ENCODE measurements at regions of chr1 and their contacts with region 1.

Region 1: GRCh38 chr1:87328272-87329050 is at the start of gene LMO4:
- DNase-seq: peak; percentile 99
- H3K4me3 ChIP-seq: peak within 1 kb of the TSS; percentile 86
- H3K27ac ChIP-seq: peak within 1 kb of the TSS; percentile 96
- H3K4me1 ChIP-seq: peaks cover 21% of the 10 kb centered on the region
- H3K27me3 ChIP-seq: no peaks in the 10 kb centered on the region
- CTCF ChIP-seq: no peak
- total RNA-seq, gene LMO4: 32.2 and 35.3 TPM in 2 replicates

Region 2: GRCh38 chr1:87131809-87132283 is 196.6 kb before region 1 on chr1:
- CTCF ChIA-PET with region 1: no interaction called
- POLR2A ChIA-PET with region 1: interaction called, 10 read pairs
- intact Hi-C with region 1: no loop called
- DNase-seq: peak; percentile 82
- H3K4me3 ChIP-seq: peak overlapping the region; percentile 36
- H3K27ac ChIP-seq: peak overlapping the region; percentile 36
- H3K4me1 ChIP-seq: no peaks in the 10 kb centered on the region
- H3K27me3 ChIP-seq: no peaks in the 10 kb centered on the region
- CTCF ChIP-seq: peak; percentile 97

Region 3: GRCh38 chr1:87392248-87393192 is 64.1 kb after region 1 on chr1:
- CTCF ChIA-PET with region 1: no interaction called
- POLR2A ChIA-PET with region 1: no interaction called
- intact Hi-C with region 1: no loop called
- DNase-seq: peak; percentile 42
- H3K4me3 ChIP-seq: no peak overlapping the region
- H3K27ac ChIP-seq: no peak overlapping the region
- H3K4me1 ChIP-seq: peaks cover 17% of the 10 kb centered on the region
- H3K27me3 ChIP-seq: no peaks in the 10 kb centered on the region
- CTCF ChIP-seq: no peak

Region 4: DNA sequence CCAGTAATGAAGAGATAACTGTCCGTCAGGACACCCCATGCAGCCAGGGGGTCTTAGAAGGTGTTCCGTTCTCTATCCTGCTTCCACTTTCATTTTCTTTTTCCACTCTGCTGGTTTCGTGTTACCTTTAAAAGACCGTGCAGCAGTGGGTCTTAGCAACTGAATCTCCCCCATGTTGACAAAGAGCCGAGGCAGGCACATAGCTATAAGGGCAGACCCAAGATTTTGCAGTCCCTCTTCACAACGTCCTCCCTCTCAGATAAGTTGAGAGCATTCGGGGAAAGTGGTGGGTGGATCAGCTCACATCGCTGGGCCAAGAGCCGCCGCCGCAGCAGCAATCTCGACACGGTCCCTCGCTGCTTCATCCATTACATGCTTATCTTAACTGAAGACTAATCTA is 355.7 kb after region 1 on chr1:
- CTCF ChIA-PET with region 1: no interaction called
- POLR2A ChIA-PET with region 1: no interaction called
- intact Hi-C with region 1: loop called (anchors 2 kb)
- DNase-seq: peak; percentile 51
- H3K4me3 ChIP-seq: peak overlapping the region; percentile 31
- H3K27ac ChIP-seq: peak overlapping the region; percentile 80
- H3K4me1 ChIP-seq: peaks cover 38% of the 10 kb centered on the region
- H3K27me3 ChIP-seq: no peaks in the 10 kb centered on the region
- CTCF ChIP-seq: no peak

Measured in A673 (cell line).